ENCODE measurements at regions of chr12 and their contacts with region 1.

Region 1: GRCh38 chr12:42482445-42483237 is 106.9 kb downstream of the PRICKLE1 start:
- DNase-seq: peak; percentile 59
- H3K4me3 ChIP-seq: peak overlapping the region; percentile 73
- H3K27ac ChIP-seq: peak overlapping the region; percentile 15
- H3K4me1 ChIP-seq: no peaks in the 10 kb centered on the region
- H3K27me3 ChIP-seq: no peaks in the 10 kb centered on the region
- CTCF ChIP-seq: peak; percentile 81

Region 2: GRCh38 chr12:42524716-42525115 is 42.1 kb after region 1 on chr12:
- intact Hi-C with region 1: no loop called
- DNase-seq: no peak
- H3K4me3 ChIP-seq: no peak overlapping the region
- H3K27ac ChIP-seq: no peak overlapping the region
- H3K4me1 ChIP-seq: no peaks in the 10 kb centered on the region
- H3K27me3 ChIP-seq: no peaks in the 10 kb centered on the region
- CTCF ChIP-seq: no peak

Region 3: GRCh38 chr12:42568952-42569915 is 86.6 kb after region 1 on chr12:
- intact Hi-C with region 1: loop called (anchors 5 kb)
- DNase-seq: no peak
- H3K4me3 ChIP-seq: no peak overlapping the region
- H3K27ac ChIP-seq: no peak overlapping the region
- H3K4me1 ChIP-seq: no peaks in the 10 kb centered on the region
- H3K27me3 ChIP-seq: no peaks in the 10 kb centered on the region
- CTCF ChIP-seq: peak; percentile 36

Region 4: GRCh38 chr12:42589465-42590329 is 107.1 kb after region 1 on chr12 and contains the start of gene PRICKLE1:
- intact Hi-C with region 1: loop called (anchors 5 kb)
- DNase-seq: no peak
- H3K4me3 ChIP-seq: peak within 1 kb of the TSS; percentile 62
- H3K27ac ChIP-seq: peak within 1 kb of the TSS; percentile 6
- H3K4me1 ChIP-seq: no peaks in the 10 kb centered on the region
- H3K27me3 ChIP-seq: peaks cover 34% of the 10 kb centered on the region
- CTCF ChIP-seq: no peak
- total RNA-seq, gene PRICKLE1: 1.1 to 2.9 TPM